ENCODE measurements at regions of chr1 and their contacts with region 1.

Region 1: GRCh38 chr1:110630839-110631663 is 24.9 kb upstream of the KCNA2 start:
- DNase-seq: peak; percentile 96
- H3K4me3 Mint-ChIP-seq: no peak overlapping the region
- H3K27ac Mint-ChIP-seq: no peak overlapping the region
- H3K4me1 Mint-ChIP-seq: peaks cover 58% of the 10 kb centered on the region
- H3K27me3 Mint-ChIP-seq: no peaks in the 10 kb centered on the region

Region 2: GRCh38 chr1:110235834-110236682 is 395.0 kb before region 1 on chr1:
- intact Hi-C with region 1: loop called (anchors 10 kb)
- DNase-seq: no peak
- H3K4me3 Mint-ChIP-seq: peak overlapping the region; percentile 74
- H3K27ac Mint-ChIP-seq: peak overlapping the region; percentile 93
- H3K4me1 Mint-ChIP-seq: peaks cover 39% of the 10 kb centered on the region
- H3K27me3 Mint-ChIP-seq: no peaks in the 10 kb centered on the region

Region 3: DNA sequence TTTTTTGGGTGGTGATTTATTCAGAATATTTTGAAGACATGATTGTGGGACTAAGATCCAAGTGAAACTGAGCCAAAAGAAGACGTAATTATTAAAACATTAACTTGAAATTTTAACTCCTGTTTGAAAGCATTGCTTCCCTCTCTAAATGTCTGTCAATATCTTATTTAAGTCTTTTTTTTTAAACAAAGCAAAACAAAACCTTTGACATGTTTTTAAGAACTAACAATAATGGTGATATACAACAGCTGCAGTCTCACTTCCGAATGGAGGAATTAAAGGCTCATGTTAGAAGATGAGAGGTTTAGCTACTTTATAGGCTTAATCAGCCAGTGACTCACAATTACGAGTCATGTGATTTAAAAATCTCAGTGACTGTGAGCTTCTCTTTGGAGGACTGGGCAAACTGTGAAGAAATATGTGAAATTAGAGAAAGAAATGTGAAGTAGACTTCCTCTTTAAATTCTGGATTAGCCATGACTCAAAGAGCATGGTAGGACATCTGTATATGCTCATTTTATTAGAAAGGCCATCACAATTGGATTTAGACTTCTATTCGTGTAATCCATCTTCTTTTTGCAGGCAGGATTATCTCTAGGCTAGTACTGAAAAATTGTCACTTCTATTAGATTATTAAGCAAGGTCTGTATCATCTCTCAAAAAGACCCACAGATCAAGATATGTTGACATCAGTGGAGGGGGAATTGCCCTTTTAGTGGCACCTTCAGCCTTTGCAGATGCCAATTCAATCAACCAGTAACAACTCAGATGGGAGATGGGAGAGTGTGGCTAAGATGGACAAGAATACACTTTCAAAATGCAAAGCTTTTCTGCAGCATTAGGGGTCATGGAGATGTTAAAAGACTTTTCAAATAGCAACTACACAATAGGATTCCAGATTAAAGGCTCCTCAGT is 15.0 kb after region 1 on chr1:
- intact Hi-C with region 1: loop called (anchors 1 kb)
- DNase-seq: peak; percentile 58
- H3K4me3 Mint-ChIP-seq: peak overlapping the region; percentile 36
- H3K27ac Mint-ChIP-seq: peak overlapping the region; percentile 71
- H3K4me1 Mint-ChIP-seq: peaks cover 45% of the 10 kb centered on the region
- H3K27me3 Mint-ChIP-seq: no peaks in the 10 kb centered on the region

Region 4: GRCh38 chr1:110766025-110766647 is 135.1 kb after region 1 on chr1:
- intact Hi-C with region 1: loop called (anchors 1 kb)
- DNase-seq: peak; percentile 86
- H3K4me3 Mint-ChIP-seq: peak overlapping the region; percentile 2
- H3K27ac Mint-ChIP-seq: no peak overlapping the region
- H3K4me1 Mint-ChIP-seq: peaks cover 9% of the 10 kb centered on the region
- H3K27me3 Mint-ChIP-seq: peaks cover 33% of the 10 kb centered on the region

Region 5: DNA sequence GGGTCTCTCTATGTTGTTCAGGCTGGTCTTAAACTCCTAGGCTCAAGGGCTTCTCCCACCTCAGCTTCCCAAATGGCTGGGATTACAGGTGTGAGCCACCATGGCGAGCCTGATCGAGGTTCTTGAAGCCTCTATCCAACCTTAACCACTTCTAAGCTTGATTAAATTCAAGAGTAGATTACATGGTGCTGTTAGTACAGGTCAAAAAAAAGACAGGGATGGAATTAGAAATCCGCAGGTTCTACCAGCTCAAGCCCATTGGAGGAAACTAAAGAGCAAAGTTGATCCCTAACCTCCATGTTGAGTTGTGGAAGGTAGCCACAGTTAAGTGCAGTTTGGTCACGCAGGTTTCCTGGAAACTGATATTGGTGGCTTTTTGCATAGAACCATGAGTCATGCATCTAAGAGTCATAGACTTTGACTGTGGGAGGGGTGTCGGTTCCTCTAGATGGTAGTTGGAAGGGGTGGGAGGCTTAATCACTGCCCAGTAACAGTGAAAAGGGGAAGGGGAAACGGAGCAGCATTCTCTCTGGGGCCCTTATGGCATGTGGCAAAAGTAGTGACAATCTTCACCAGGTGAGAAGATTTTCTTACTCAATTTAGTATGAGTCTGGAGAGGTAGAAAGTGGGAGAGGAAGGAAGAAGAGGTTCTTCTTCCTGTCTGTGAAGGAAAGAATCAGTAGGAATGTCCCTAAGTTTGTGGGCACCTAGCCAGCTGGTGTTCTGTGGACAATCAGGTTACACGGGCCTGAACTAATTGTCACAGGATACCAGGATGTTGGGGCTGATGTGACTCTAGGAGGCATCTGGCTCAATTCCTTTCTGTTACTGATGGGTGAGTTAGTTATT is 248.9 kb after region 1 on chr1:
- intact Hi-C with region 1: loop called (anchors 2 kb)
- DNase-seq: peak; percentile 91
- H3K4me3 Mint-ChIP-seq: peak overlapping the region; percentile 84
- H3K27ac Mint-ChIP-seq: peak overlapping the region; percentile 99
- H3K4me1 Mint-ChIP-seq: peaks cover 65% of the 10 kb centered on the region
- H3K27me3 Mint-ChIP-seq: no peaks in the 10 kb centered on the region

Region 6: GRCh38 chr1:110963691-110964399 is 332.8 kb after region 1 on chr1 and contains the start of gene LRIF1:
- intact Hi-C with region 1: loop called (anchors 10 kb)
- DNase-seq: peak; percentile 100
- H3K4me3 Mint-ChIP-seq: peak within 1 kb of the TSS; percentile 89
- H3K27ac Mint-ChIP-seq: peak within 1 kb of the TSS; percentile 97
- H3K4me1 Mint-ChIP-seq: peaks cover 28% of the 10 kb centered on the region
- H3K27me3 Mint-ChIP-seq: peaks cover 10% of the 10 kb centered on the region
- total RNA-seq, gene LRIF1: 14.0 and 14.4 TPM in 2 replicates

Region 7: GRCh38 chr1:111739194-111739924 is 1108.3 kb after region 1 on chr1 and contains the start of gene INKA2:
- intact Hi-C with region 1: loop called (anchors 5 kb)
- DNase-seq: peak; percentile 95
- H3K4me3 Mint-ChIP-seq: peak within 1 kb of the TSS; percentile 96
- H3K27ac Mint-ChIP-seq: peak within 1 kb of the TSS; percentile 92
- H3K4me1 Mint-ChIP-seq: peaks cover 21% of the 10 kb centered on the region
- H3K27me3 Mint-ChIP-seq: peaks cover 52% of the 10 kb centered on the region
- total RNA-seq, gene INKA2: 2.4 and 2.6 TPM in 2 replicates